Activated CD4-positive, alpha-beta T cell treated with anti-CD3 and anti-CD28 coated beads for 36 hours (primary cell): ENCODE measurements at regions of chr19 and their contacts with region 1.

Region 1: GRCh38 chr19:52351511-52351910 is 15.5 kb downstream of the ZNF610 start:
- DNase-seq: peak; percentile 35
- ATAC-seq: no peak
- H3K4me3 Mint-ChIP-seq: no peak overlapping the region
- H3K27ac Mint-ChIP-seq: no peak overlapping the region
- H3K4me1 Mint-ChIP-seq: no peaks in the 10 kb centered on the region
- H3K27me3 Mint-ChIP-seq: no peaks in the 10 kb centered on the region

Region 2: GRCh38 chr19:52286256-52286655 is 65.3 kb before region 1 on chr19:
- CTCF ChIA-PET with region 1: no interaction called
- POLR2A ChIA-PET with region 1: interaction called, 10 read pairs
- intact Hi-C with region 1: no loop called
- DNase-seq: no peak
- ATAC-seq: no peak
- H3K4me3 Mint-ChIP-seq: no peak overlapping the region
- H3K27ac Mint-ChIP-seq: no peak overlapping the region
- H3K4me1 Mint-ChIP-seq: no peaks in the 10 kb centered on the region
- H3K27me3 Mint-ChIP-seq: no peaks in the 10 kb centered on the region